GM13976 (cell line): ENCODE measurements at regions of chr16 and their contacts with region 1.

Region 1: GRCh38 chr16:49407873-49408550 is 34.4 kb downstream of the C16orf78 start:
- DNase-seq: peak; percentile 82
- CTCF ChIP-seq: peak; percentile 84

Region 2: GRCh38 chr16:49129935-49130334 is 278.1 kb before region 1 on chr16:
- in situ Hi-C with region 1: no loop called
- DNase-seq: no peak
- CTCF ChIP-seq: no peak

Region 3: DNA sequence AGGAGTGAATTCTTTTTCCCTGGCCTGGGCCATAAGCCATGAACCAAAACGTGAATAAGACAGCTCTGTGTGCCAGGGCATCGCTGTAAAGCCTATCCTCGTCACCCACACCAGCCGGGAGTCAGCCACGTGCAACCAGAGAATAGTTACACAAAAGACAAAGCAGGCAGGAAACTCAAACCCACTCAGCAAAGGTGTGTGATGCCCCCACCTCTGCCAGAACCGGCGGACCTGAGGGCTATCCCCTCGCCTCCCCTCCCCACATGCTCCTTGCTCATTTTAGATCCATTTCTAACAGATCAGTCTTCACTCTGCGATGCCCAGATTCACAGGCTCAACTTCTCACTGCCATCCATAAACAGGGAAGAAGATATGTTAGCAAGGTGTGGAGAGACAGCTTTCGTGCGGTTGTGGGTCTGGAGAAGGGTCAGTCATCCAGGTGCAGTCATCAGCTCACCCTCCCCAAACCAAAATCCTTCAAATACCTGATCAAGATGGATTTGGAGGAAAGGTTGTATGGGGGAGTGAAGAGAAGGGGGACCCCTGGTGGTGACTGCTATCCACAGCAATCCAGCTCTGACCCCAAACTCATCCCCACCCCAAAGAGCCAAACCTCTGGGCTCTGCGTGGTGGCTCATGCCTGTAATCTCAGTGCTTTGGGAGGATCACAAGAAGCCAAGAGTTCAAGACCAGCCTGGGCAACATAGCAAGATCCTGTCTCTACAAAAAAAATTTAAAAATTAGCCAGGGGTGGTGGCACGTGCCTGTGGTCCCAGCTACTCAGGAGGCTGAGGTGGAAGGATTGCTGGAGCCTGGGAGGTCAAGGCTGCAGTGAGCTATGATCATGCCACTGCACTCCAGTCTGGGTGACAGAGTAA is 184.8 kb after region 1 on chr16:
- in situ Hi-C with region 1: loop called (anchors 25 kb)
- DNase-seq: peak; percentile 77
- CTCF ChIP-seq: peak; percentile 68